Gastrocnemius medialis (tissue), 4 donors: ENCODE measurements at regions of chr16 and their contacts with region 1.

Region 1: GRCh38 chr16:82609140-82609539 is 17.6 kb upstream of the CDH13 start:
- DNase-seq: peak; percentile 47 to 50
- ATAC-seq: peak; percentile 89 to 92
- H3K4me3 ChIP-seq: no peak overlapping the region
- H3K27ac ChIP-seq: peak overlapping the region in 3 of 4 donors; percentile 46 to 55 (median 54)
- H3K4me1 ChIP-seq: no peaks in the 10 kb centered on the region
- H3K27me3 ChIP-seq: no peaks in the 10 kb centered on the region
- CTCF ChIP-seq: no peak
- POLR2A ChIP-seq: no peak

Region 2: DNA sequence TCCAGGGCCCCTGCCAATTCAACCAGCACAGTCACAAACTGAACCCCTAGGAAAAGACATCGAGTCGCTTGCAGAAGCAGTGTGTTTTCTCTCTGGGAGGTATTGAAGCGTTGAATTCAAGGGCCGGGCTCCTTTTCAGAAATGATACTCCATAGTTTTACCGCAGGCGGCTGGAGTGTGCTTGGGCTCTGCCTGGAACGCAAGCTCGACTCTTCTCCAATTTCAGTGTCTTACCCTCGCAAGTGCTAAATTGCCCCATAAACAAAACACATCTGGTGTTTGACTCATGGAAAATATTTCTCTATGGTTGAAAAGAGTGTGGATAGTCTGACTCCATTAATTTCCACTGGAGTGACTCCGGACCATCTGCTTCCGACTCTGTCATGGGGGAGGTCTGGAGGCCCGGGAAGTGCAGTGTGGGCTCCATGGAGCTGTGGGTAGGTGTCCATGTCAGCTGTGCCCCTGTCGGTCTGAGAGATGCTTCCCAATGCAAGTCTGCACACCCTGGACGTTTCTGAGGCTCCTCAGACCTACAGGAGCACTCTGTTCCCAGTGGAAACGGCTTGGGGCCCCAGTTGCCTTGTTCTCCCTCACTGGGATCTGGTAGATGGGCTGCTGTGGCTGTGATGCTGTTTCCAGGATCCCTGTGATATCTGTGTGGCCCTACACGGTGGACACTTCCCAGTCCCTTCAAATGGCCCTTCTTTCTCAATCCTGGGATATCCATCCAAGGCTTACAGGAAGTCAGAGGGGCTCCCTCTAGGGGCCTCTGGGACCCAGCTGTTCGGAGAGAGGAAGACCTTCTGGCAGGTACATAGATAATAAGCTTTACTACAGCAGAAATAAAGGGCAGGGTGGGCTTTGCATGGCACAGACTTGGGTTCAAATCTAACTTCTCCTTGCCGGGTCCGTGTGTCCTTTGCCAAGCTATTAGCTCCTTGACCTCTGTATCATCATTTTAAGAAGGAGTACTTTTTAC is 102.2 kb before region 1 on chr16:
- in situ Hi-C with region 1: no loop called
- intact Hi-C with region 1: no loop called
- DNase-seq: no peak
- ATAC-seq: no peak
- H3K4me3 ChIP-seq: no peak overlapping the region
- H3K27ac ChIP-seq: no peak overlapping the region
- H3K4me1 ChIP-seq: no peaks in the 10 kb centered on the region
- H3K27me3 ChIP-seq: no peaks in the 10 kb centered on the region
- CTCF ChIP-seq: no peak
- POLR2A ChIP-seq: no peak

Region 3: GRCh38 chr16:82626791-82627261 is 17.7 kb after region 1 on chr16 and contains the start of gene CDH13:
- in situ Hi-C with region 1: no loop called
- intact Hi-C with region 1: loop called (anchors 1 kb)
- DNase-seq: peak; percentile 18 to 40
- ATAC-seq: peak; percentile 7 to 16
- H3K4me3 ChIP-seq: peak within 1 kb of the TSS; percentile 58 to 79 (median 62)
- H3K27ac ChIP-seq: peak within 1 kb of the TSS; percentile 86 to 93 (median 88)
- H3K4me1 ChIP-seq: peaks cover 46 to 50% of the 10 kb centered on the region in 2 donors
- H3K27me3 ChIP-seq: no peaks in the 10 kb centered on the region
- CTCF ChIP-seq: no peak
- POLR2A ChIP-seq: peak; percentile 38 to 60
- total RNA-seq, gene CDH13: 5.8 to 36.7 (median 20.4) TPM